MCF 10A (cell line): ENCODE measurements at regions of chr13 and their contacts with region 1.

Region 1: GRCh38 chr13:79060216-79060615 is 345.8 kb downstream of the RBM26 start:
- DNase-seq: no peak
- H3K4me3 Mint-ChIP-seq: no peak overlapping the region
- H3K27ac Mint-ChIP-seq: no peak overlapping the region
- H3K4me1 Mint-ChIP-seq: no peaks in the 10 kb centered on the region
- H3K27me3 Mint-ChIP-seq: no peaks in the 10 kb centered on the region
- CTCF ChIP-seq: no peak

Region 2: GRCh38 chr13:79141082-79141481 is 80.9 kb after region 1 on chr13:
- CTCF ChIA-PET with region 1: no interaction called
- POLR2A ChIA-PET with region 1: no interaction called
- intact Hi-C with region 1: loop called (anchors 5 kb)
- DNase-seq: no peak
- H3K4me3 Mint-ChIP-seq: no peak overlapping the region
- H3K27ac Mint-ChIP-seq: no peak overlapping the region
- H3K4me1 Mint-ChIP-seq: no peaks in the 10 kb centered on the region
- H3K27me3 Mint-ChIP-seq: no peaks in the 10 kb centered on the region
- CTCF ChIP-seq: no peak